Prostate gland (tissue), 2 donors: ENCODE measurements at regions of chr12 and their contacts with region 1.

Region 1: GRCh38 chr12:58346032-58346632 is 404.8 kb downstream of the ATP23 start:
- DNase-seq: no peak
- H3K4me3 ChIP-seq: no peak overlapping the region
- H3K27ac ChIP-seq: no peak overlapping the region
- H3K4me1 ChIP-seq: no peaks in the 10 kb centered on the region
- H3K27me3 ChIP-seq: no peaks in the 10 kb centered on the region
- CTCF ChIP-seq: peak; percentile 48 to 85 (median 80)
- POLR2A ChIP-seq: no peak

Region 2: GRCh38 chr12:57983146-57983857 is 362.8 kb before region 1 on chr12:
- intact Hi-C with region 1: loop called (anchors 10 kb)
- DNase-seq: no peak
- H3K4me3 ChIP-seq: no peak overlapping the region
- H3K27ac ChIP-seq: no peak overlapping the region
- H3K4me1 ChIP-seq: no peaks in the 10 kb centered on the region
- H3K27me3 ChIP-seq: no peaks in the 10 kb centered on the region
- CTCF ChIP-seq: peak in 3 of 4 experiments; percentile 45 to 76 (median 68)
- POLR2A ChIP-seq: no peak

Region 3: DNA sequence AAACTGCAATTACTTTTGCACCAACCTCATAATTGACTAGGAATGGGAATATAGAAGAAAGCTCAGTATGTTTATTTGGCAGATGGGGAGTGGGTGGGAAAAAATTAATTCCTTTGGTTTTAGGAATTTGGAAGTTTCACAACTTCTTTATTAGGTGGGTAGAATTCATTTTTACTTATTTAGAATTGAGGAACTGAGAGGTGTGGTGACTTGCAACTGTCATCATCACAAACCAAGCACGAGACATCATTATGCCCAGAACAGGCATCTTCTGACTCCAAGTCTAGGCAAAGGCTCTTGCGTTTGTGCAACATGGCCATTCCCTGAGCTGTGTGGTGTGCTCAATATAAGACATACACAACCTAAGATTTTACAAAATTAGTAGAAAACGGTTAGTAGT is 24.7 kb before region 1 on chr12:
- intact Hi-C with region 1: no loop called
- DNase-seq: no peak
- H3K4me3 ChIP-seq: no peak overlapping the region
- H3K27ac ChIP-seq: no peak overlapping the region
- H3K4me1 ChIP-seq: no peaks in the 10 kb centered on the region
- H3K27me3 ChIP-seq: no peaks in the 10 kb centered on the region
- CTCF ChIP-seq: no peak
- POLR2A ChIP-seq: no peak

Region 4: GRCh38 chr12:58540480-58541299 is 194.6 kb after region 1 on chr12:
- intact Hi-C with region 1: loop called (anchors 5 kb)
- DNase-seq: peak; percentile 56
- H3K4me3 ChIP-seq: no peak overlapping the region
- H3K27ac ChIP-seq: no peak overlapping the region
- H3K4me1 ChIP-seq: no peaks in the 10 kb centered on the region
- H3K27me3 ChIP-seq: no peaks in the 10 kb centered on the region
- CTCF ChIP-seq: peak; percentile 14 to 67 (median 56)
- POLR2A ChIP-seq: no peak

Region 5: GRCh38 chr12:59087077-59087673 is 741.0 kb after region 1 on chr12:
- intact Hi-C with region 1: loop called (anchors 5 kb)
- DNase-seq: no peak
- H3K4me3 ChIP-seq: no peak overlapping the region
- H3K27ac ChIP-seq: no peak overlapping the region
- H3K4me1 ChIP-seq: no peaks in the 10 kb centered on the region
- H3K27me3 ChIP-seq: no peaks in the 10 kb centered on the region
- CTCF ChIP-seq: peak in 3 of 4 experiments; percentile 49 to 62 (median 53)
- POLR2A ChIP-seq: no peak

Region 6: DNA sequence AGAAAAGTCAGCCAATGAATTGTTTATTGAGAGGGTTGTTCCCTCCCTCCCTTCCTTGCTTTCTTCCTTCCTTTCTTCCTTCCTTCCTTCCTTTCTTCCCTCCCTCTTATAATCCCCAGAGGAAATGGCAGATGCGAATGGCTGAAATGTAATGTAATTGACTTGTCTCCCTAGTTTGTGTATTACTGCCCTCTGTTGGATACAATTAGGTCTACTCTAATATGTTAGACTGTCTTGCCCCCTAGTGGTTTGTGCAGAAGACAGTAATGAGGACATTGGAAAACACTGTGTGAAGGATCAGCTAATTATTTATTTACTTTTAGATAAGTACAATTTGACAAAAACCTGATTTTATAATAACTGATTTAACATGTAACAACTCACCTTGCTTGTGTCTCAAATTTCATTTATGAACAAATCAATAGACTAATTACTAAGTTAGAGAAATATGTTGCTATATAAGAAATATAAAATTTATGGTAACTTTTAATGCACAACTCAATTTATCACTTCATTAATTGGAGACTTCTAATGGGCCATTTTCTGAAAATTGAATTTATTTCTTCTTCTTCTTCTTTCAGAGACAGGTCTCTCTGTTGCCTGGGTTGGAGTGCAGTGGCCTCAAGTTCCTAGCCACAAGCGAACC is 804.0 kb after region 1 on chr12:
- intact Hi-C with region 1: loop called (anchors 5 kb)
- DNase-seq: peak; percentile 22
- H3K4me3 ChIP-seq: no peak overlapping the region
- H3K27ac ChIP-seq: no peak overlapping the region
- H3K4me1 ChIP-seq: no peaks in the 10 kb centered on the region
- H3K27me3 ChIP-seq: no peaks in the 10 kb centered on the region
- CTCF ChIP-seq: peak; percentile 63 to 97 (median 94)
- POLR2A ChIP-seq: no peak